ENCODE measurements at regions of chr12 and their contacts with region 1.

Region 1: GRCh38 chr12:15856097-15856982 is 25.8 kb upstream of the STRAP start:
- DNase-seq: no peak
- ATAC-seq: peak; percentile 66
- H3K4me3 ChIP-seq: no peak overlapping the region
- H3K27ac ChIP-seq: no peak overlapping the region
- H3K4me1 ChIP-seq: no peaks in the 10 kb centered on the region
- H3K27me3 ChIP-seq: no peaks in the 10 kb centered on the region
- CTCF ChIP-seq: peak; percentile 82

Region 2: GRCh38 chr12:15590180-15590826 is 266.0 kb before region 1 on chr12:
- intact Hi-C with region 1: loop called (anchors 5 kb)
- DNase-seq: no peak
- ATAC-seq: peak; percentile 97
- H3K4me3 ChIP-seq: peak overlapping the region; percentile 22
- H3K27ac ChIP-seq: no peak overlapping the region
- H3K4me1 ChIP-seq: peaks cover 4% of the 10 kb centered on the region
- H3K27me3 ChIP-seq: no peaks in the 10 kb centered on the region
- CTCF ChIP-seq: peak; percentile 90

Region 3: GRCh38 chr12:15808652-15809051 is 47.7 kb before region 1 on chr12:
- intact Hi-C with region 1: no loop called
- DNase-seq: no peak
- ATAC-seq: no peak
- H3K4me3 ChIP-seq: no peak overlapping the region
- H3K27ac ChIP-seq: no peak overlapping the region
- H3K4me1 ChIP-seq: no peaks in the 10 kb centered on the region
- H3K27me3 ChIP-seq: no peaks in the 10 kb centered on the region
- CTCF ChIP-seq: no peak

Region 4: GRCh38 chr12:16261944-16262343 is 405.6 kb after region 1 on chr12:
- intact Hi-C with region 1: no loop called
- DNase-seq: no peak
- ATAC-seq: no peak
- H3K4me3 ChIP-seq: no peak overlapping the region
- H3K27ac ChIP-seq: no peak overlapping the region
- H3K4me1 ChIP-seq: no peaks in the 10 kb centered on the region
- H3K27me3 ChIP-seq: no peaks in the 10 kb centered on the region
- CTCF ChIP-seq: no peak